AG04450 (cell line): ENCODE measurements at regions of chr1 and their contacts with region 1.

Region 1: DNA sequence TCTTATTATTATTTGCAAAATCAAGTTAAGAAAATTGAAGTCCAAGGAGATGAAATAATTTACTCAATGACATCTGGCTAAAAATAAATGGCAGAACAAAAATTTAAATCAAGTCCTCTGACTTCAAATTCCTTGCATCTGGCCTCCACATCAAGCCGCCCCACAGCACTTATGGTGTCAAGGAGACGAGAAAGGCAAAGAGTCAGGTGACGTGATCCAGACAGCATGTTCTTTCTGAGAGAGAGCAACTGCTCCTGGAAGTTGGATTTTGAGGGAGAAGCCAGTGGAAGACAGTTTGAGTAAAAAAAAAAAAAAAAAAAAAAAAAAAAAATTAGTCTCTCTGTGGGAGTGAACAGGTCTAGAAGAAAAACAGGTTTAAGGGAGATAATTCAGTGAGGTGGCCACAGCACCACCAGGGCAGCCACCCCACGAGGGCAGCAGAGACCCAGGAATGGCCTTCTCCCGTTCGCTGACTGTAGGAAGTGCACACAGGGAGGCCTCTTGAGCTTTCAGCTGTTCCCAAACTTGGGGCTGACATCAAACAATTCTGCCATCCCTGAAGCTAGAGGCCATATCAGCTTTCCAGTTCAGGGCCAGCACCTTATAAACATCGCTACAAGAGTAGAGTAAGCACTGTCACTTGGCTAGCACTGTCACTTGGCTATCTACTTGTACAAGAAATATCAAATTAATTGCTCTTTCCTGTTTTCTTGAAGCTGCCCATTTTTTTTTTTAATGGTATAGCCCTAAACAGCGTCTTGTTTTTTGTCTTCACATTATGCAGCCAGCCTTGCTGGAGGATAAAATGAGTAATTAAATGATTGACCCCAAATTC is 7.8 kb downstream of the C1orf162 start:
- DNase-seq: peak; percentile 29
- H3K4me3 ChIP-seq: no peak overlapping the region
- H3K27ac ChIP-seq: no peak overlapping the region
- H3K27me3 ChIP-seq: no peaks in the 10 kb centered on the region
- CTCF ChIP-seq: peak; percentile 87

Region 2: DNA sequence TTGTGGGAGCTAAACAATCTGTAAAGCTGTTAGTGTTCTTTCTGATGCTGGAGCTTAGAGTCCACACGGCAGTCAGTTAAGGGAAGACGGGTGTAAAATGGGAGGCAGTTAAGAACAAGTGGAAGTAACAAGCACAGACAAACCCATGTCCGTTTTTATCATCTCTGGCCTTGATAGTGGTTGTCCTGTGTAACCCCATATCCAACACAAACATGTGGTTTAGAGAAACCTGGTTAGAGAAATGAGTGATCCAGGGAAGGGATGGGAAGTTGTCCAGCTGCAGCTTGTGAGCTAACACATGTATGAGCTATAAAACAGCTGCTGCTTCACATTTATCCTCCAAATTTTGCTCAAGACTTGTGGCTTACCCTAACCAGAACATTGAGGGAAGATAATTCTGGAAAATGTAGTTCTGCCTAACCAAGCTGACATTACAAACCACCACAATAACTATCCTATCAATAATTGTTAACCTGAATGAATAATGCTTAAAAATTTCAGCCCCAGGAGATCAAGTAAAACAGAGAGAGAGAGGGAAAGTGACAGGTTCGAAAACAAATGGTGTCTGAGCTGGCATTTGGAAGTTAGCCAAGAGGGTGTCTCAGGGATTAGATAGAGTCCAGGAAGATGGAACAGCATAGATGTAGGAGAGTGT is 18.4 kb before region 1 on chr1:
- CTCF ChIA-PET with region 1: interaction called, 13 read pairs
- POLR2A ChIA-PET with region 1: no interaction called
- DNase-seq: peak; percentile 81
- H3K4me3 ChIP-seq: no peak overlapping the region
- H3K27ac ChIP-seq: peak overlapping the region; percentile 68
- H3K27me3 ChIP-seq: no peaks in the 10 kb centered on the region
- CTCF ChIP-seq: no peak

Region 3: DNA sequence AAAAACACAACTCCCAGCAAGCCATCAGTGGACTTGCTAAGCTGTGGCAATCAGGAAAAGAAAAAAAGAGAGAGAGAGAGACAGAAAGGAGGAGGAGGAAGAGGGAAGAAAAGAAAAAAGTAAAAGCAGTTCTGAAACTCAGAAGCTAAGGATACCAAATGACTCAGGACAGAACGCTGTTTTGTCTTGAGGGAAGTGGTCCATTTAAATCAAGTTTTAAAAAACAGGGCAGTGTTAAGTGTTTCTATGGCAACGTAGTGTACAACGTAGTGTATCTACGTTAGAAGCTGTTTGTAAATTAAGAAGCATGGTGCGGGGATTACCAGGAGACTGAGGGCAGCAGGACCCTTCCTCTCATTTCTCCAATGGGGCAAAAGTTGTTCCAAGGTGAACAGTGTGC is 16.0 kb after region 1 on chr1:
- CTCF ChIA-PET with region 1: interaction called, 10 read pairs
- POLR2A ChIA-PET with region 1: no interaction called
- DNase-seq: no peak
- H3K4me3 ChIP-seq: no peak overlapping the region
- H3K27ac ChIP-seq: no peak overlapping the region
- H3K27me3 ChIP-seq: peaks cover 27% of the 10 kb centered on the region
- CTCF ChIP-seq: no peak

Region 4: GRCh38 chr1:111704776-111705175 is 223.2 kb after region 1 on chr1:
- CTCF ChIA-PET with region 1: interaction called, 11 read pairs
- POLR2A ChIA-PET with region 1: interaction called, 3 read pairs
- DNase-seq: no peak
- H3K4me3 ChIP-seq: no peak overlapping the region
- H3K27ac ChIP-seq: no peak overlapping the region
- H3K27me3 ChIP-seq: no peaks in the 10 kb centered on the region
- CTCF ChIP-seq: no peak

Region 5: DNA sequence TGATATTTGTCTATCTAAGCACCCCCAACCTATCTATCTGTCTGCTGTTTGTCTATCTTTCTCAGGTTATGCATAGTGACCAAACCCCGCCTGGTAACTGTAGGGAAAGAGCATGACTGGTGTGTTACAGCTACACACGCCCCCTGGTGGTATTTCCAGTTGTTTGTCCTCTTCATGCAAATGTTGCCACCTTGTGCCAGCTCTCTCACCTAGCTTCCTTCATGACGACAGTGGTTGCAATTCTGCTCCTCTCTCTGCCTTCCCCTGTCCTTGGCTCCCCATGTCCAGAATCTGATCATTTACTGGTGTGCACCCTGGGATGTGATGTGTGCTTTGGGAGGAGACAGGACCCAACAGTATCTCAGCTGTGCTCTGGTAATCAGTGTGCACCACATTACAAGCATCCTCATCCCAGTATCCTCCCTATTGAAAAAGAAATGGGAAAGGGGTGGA is 265.7 kb after region 1 on chr1:
- CTCF ChIA-PET with region 1: interaction called, 33 read pairs
- POLR2A ChIA-PET with region 1: interaction called, 3 read pairs
- DNase-seq: no peak
- H3K4me3 ChIP-seq: no peak overlapping the region
- H3K27ac ChIP-seq: no peak overlapping the region
- H3K27me3 ChIP-seq: no peaks in the 10 kb centered on the region
- CTCF ChIP-seq: peak; percentile 74

Region 6: GRCh38 chr1:111762332-111762731 is 280.7 kb after region 1 on chr1:
- CTCF ChIA-PET with region 1: interaction called, 133 read pairs
- POLR2A ChIA-PET with region 1: interaction called, 3 read pairs
- DNase-seq: no peak
- H3K4me3 ChIP-seq: no peak overlapping the region
- H3K27ac ChIP-seq: no peak overlapping the region
- H3K27me3 ChIP-seq: no peaks in the 10 kb centered on the region
- CTCF ChIP-seq: no peak

Region 7: DNA sequence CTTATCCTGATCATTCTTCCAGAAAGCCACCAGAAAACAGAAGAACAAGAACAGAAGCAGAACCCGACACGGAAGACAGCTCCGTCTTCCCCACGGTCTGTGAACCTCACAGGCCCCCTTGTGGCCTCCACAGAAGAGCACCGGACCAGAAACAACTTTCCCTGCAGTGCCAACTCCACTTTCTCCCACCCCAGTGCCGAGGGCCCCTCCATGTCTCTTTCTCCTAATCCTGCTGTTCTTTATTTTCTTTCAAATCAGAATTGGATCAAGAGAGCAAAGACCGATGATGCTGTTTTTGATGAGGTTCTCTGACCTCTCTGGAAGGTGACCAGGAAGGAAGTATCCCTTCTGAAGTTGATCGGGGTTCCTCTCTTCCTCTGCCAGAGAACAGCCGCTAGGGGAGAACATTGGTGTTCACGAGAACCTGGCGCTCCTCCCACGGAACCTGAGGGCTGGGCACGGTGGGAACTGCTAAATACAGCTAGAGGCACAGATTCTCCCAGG is 855.5 kb after region 1 on chr1:
- CTCF ChIA-PET with region 1: interaction called, 10 read pairs
- POLR2A ChIA-PET with region 1: no interaction called
- DNase-seq: peak; percentile 11
- H3K4me3 ChIP-seq: no peak overlapping the region
- H3K27ac ChIP-seq: no peak overlapping the region
- H3K27me3 ChIP-seq: peaks cover 36% of the 10 kb centered on the region
- CTCF ChIP-seq: peak; percentile 69